ENCODE measurements at regions of chr3 and their contacts with region 1.

Region 1: DNA sequence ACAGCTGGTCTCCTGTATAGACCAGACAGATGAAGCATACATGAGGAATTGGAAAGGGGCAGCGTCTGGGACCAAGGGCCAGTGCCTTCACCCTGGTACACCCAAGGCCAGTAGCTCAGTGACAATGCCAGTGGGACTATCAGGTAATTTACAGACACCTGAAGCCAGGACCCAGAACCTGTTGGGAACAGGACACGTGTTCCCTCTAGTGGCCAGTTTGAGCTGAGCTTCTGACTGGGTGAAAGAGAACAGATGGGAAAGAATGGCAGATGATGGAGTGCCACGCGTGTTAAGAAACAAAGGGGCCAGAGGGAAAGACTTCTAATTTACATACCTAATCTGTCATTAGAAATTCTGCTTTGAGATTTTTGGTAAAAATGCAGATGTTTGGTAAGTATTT is 5.1 kb upstream of the SLC25A38 start:
- DNase-seq: no peak
- ATAC-seq: peak; percentile 92
- H3K4me3 ChIP-seq: no peak overlapping the region
- H3K27ac ChIP-seq: no peak overlapping the region; the same call in 1 of the 2 replicates
- H3K4me1 ChIP-seq: peaks cover 14% of the 10 kb centered on the region
- H3K27me3 ChIP-seq: no peaks in the 10 kb centered on the region
- CTCF ChIP-seq: peak; percentile 84 to 92 (median 91); a peak in 5 of 6 replicates
- EP300 ChIP-seq: no peak
- POLR2A ChIP-seq: no peak
- RAD21 ChIP-seq: peak; percentile 96

Region 2: DNA sequence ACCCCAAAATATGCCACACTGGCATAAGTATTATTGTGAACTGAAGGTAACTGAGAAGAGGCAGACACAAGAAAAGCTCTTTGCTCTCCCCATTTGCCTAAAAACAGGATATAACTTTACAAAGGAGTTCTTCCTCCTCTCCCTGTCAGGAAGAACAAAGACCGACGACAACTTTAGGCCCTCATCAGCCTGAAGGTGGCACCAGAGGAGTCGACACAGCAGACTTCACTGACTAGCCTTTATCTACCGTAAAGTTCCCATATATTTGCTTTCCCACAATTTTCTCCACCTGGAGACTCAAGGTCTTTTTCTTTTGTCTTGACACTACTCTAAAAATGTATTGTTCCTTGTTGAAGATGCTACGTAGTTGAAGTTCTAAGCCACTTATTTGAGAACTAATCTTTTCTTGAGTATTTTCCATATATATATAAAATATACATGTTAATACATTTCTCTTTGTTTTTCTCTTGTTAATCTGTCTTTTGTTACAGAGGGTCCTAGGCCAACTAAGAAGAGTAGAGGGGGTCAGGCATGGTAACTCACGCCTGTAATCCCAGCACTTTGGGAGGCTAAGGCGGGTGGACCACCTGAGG is 169.5 kb before region 1 on chr3:
- CTCF ChIA-PET with region 1: interaction called, 5 read pairs
- POLR2A ChIA-PET with region 1: no interaction called
- RAD21 ChIA-PET with region 1: interaction called, 4 read pairs
- SMC1A ChIA-PET with region 1: no interaction called
- in situ Hi-C with region 1: no loop called
- intact Hi-C with region 1: loop called (anchors 5 kb)
- DNase-seq: no peak
- ATAC-seq: peak; percentile 86
- H3K4me3 ChIP-seq: no peak overlapping the region
- H3K27ac ChIP-seq: no peak overlapping the region
- H3K4me1 ChIP-seq: peaks cover 8% of the 10 kb centered on the region; the same call in 1 of the 2 replicates
- H3K27me3 ChIP-seq: no peaks in the 10 kb centered on the region
- CTCF ChIP-seq: peak; percentile 65 to 77 (median 74)
- EP300 ChIP-seq: no peak
- POLR2A ChIP-seq: no peak
- RAD21 ChIP-seq: peak; percentile 70

Region 3: GRCh38 chr3:39327746-39328349 is 50.2 kb before region 1 on chr3:
- CTCF ChIA-PET with region 1: interaction called, 3 read pairs
- POLR2A ChIA-PET with region 1: interaction called, 6 read pairs
- RAD21 ChIA-PET with region 1: interaction called, 5 read pairs
- SMC1A ChIA-PET with region 1: interaction called, 5 read pairs
- in situ Hi-C with region 1: no loop called
- intact Hi-C with region 1: loop called (anchors 2 kb)
- DNase-seq: peak; percentile 67
- ATAC-seq: peak; percentile 87
- H3K4me3 ChIP-seq: no peak overlapping the region
- H3K27ac ChIP-seq: peak overlapping the region; percentile 84
- H3K4me1 ChIP-seq: peaks cover 23% of the 10 kb centered on the region
- H3K27me3 ChIP-seq: no peaks in the 10 kb centered on the region
- CTCF ChIP-seq: no peak
- EP300 ChIP-seq: peak in 1 of 2 experiments; percentile 63; a peak in 2 of 4 replicates
- POLR2A ChIP-seq: no peak
- RAD21 ChIP-seq: no peak

Region 4: DNA sequence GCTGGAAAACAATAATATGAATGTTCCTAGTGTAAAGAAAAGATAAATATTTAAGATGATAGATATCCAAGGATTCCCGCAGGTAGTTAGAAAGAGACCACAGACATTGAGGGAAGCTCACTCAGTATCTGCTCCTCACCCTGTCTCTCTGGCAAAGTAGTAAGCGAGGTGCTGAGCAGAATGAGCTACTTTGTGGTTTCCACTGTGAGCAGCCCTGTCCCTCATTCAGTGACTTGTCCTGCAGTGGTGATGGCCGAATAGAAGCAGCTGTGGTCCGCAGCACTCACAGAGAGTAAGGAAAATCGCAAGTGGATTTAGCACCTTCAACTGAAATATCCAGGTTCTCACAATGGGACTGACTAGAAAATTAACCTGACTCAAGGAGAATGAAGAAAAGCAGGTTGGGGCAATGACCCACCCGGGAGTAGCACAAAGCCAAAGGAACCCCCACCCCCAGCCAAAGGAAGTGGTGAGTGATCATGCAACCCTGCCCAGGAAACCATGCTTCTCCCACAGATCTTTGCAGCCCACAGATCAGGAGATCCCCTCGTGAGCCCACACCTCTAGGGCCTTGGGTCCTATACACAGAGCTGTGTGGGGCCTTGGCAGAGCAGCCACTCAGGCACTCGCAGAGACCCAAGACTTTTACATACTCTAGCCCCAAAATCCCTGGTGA is 16.7 kb before region 1 on chr3:
- CTCF ChIA-PET with region 1: interaction called, 14 read pairs
- POLR2A ChIA-PET with region 1: no interaction called
- RAD21 ChIA-PET with region 1: interaction called, 5 read pairs
- SMC1A ChIA-PET with region 1: interaction called, 4 read pairs
- in situ Hi-C with region 1: no loop called
- intact Hi-C with region 1: no loop called
- DNase-seq: no peak
- ATAC-seq: peak; percentile 94
- H3K4me3 ChIP-seq: no peak overlapping the region
- H3K27ac ChIP-seq: peak overlapping the region; percentile 20; the same call in 1 of the 2 replicates
- H3K4me1 ChIP-seq: peaks cover 11% of the 10 kb centered on the region
- H3K27me3 ChIP-seq: no peaks in the 10 kb centered on the region
- CTCF ChIP-seq: no peak
- EP300 ChIP-seq: no peak
- POLR2A ChIP-seq: no peak
- RAD21 ChIP-seq: no peak

Region 5: DNA sequence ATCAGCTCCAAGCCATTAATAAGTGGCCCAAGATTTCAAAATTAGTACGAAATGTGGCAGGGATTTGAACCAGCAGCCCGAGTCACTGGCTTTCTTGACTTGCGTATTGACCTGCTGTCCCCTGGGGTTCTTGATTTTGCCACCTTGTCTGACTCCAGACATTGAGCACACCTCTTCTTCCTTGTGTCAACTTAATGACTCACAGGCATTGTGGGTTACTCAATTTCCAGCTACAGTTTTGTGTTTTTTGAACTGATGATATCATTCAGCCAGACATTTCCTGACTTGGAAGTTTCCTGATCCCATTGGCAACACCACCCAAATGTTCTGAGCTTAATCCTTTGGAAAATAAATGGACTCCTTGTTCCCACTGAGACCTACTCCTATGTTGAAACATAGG is 153.6 kb after region 1 on chr3:
- CTCF ChIA-PET with region 1: no interaction called
- POLR2A ChIA-PET with region 1: no interaction called
- RAD21 ChIA-PET with region 1: no interaction called
- SMC1A ChIA-PET with region 1: no interaction called
- in situ Hi-C with region 1: no loop called
- intact Hi-C with region 1: no loop called
- DNase-seq: no peak
- ATAC-seq: no peak
- H3K4me3 ChIP-seq: no peak overlapping the region
- H3K27ac ChIP-seq: no peak overlapping the region
- H3K4me1 ChIP-seq: no peaks in the 10 kb centered on the region
- H3K27me3 ChIP-seq: no peaks in the 10 kb centered on the region; a peak in 1 of 4 replicates
- CTCF ChIP-seq: no peak
- EP300 ChIP-seq: no peak
- POLR2A ChIP-seq: no peak
- RAD21 ChIP-seq: no peak